H1 (cell line): ENCODE measurements at regions of chr12 and their contacts with region 1.

Region 1: DNA sequence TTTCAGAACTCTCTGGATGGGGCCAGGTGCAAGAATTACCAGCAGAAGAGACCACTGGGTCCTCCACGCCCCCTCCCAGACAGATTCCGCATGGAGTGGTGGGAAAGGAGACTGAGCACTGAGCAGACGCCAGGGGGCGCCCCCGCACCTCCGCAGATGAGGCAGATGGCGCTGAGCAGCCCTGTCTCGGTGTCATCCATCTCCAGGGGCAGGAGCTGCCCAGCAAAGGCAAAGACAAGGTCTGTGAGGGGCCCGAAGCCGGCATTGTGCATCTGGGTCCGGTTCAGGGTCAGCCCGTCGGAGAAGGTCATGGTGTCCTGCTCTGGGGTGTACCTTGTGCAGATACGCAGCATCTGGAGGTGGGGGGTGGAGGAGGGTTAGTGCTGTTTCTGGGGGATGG is 6.3 kb upstream of the ITGB7 start:
- DNase-seq: peak in 1 of 2 experiments; percentile 96
- H3K4me3 ChIP-seq: no peak overlapping the region
- H3K27ac ChIP-seq: no peak overlapping the region
- H3K4me1 ChIP-seq: peaks cover 21 to 45% (median 35%) of the 10 kb centered on the region in 4 experiments
- H3K27me3 ChIP-seq: no peaks in the 10 kb centered on the region
- CTCF ChIP-seq: peak in 2 of 3 experiments; percentile 96 to 97; a peak in 3 of 4 replicates
- EP300 ChIP-seq: no peak
- POLR2A ChIP-seq: no peak
- RAD21 ChIP-seq: peak; percentile 98

Region 2: DNA sequence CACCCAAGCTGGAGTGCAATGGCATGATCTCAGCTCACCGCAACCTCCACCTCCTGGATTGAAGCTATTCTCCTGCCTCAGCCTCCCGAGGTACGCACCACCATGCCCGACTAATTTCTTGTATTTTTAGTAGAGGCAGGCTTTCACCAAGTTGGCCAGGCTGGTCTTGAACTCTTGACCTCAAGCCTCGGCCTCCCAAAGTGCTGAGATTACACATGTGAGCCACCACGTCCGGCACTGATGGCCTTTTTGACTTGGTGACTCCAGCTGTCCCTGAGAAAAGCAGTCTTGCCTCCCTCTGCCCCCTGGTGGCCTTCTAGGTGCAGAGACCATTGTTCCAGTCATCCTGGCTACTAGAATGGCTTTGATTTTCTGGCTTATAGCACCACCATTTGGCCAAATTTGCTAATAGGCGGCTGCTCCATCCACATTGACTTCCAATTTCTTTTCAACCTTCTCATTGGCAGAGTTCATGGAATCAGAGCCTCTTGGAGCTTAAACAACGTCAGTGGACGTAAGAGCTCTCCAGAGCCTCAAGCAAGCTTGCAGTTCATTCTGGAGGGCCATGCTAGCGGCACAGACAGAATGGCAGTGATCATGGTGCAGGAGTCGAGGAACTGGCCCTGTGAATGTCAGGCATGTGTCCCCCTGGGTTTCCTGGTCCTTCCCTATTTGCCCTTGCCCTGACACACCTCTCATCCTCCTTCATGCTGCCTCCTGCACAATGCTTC is 232.5 kb before region 1 on chr12:
- CTCF ChIA-PET with region 1: no interaction called
- POLR2A ChIA-PET with region 1: no interaction called
- DNase-seq: peak; percentile 84 to 88
- H3K4me3 ChIP-seq: no peak overlapping the region
- H3K27ac ChIP-seq: no peak overlapping the region
- H3K4me1 ChIP-seq: peaks cover 0 to 10% (median 0%) of the 10 kb centered on the region in 4 experiments; a peak in 1 of 7 replicates
- H3K27me3 ChIP-seq: no peaks in the 10 kb centered on the region
- CTCF ChIP-seq: peak; percentile 92 to 100 (median 100)
- EP300 ChIP-seq: no peak
- POLR2A ChIP-seq: no peak
- RAD21 ChIP-seq: peak; percentile 100

Region 3: DNA sequence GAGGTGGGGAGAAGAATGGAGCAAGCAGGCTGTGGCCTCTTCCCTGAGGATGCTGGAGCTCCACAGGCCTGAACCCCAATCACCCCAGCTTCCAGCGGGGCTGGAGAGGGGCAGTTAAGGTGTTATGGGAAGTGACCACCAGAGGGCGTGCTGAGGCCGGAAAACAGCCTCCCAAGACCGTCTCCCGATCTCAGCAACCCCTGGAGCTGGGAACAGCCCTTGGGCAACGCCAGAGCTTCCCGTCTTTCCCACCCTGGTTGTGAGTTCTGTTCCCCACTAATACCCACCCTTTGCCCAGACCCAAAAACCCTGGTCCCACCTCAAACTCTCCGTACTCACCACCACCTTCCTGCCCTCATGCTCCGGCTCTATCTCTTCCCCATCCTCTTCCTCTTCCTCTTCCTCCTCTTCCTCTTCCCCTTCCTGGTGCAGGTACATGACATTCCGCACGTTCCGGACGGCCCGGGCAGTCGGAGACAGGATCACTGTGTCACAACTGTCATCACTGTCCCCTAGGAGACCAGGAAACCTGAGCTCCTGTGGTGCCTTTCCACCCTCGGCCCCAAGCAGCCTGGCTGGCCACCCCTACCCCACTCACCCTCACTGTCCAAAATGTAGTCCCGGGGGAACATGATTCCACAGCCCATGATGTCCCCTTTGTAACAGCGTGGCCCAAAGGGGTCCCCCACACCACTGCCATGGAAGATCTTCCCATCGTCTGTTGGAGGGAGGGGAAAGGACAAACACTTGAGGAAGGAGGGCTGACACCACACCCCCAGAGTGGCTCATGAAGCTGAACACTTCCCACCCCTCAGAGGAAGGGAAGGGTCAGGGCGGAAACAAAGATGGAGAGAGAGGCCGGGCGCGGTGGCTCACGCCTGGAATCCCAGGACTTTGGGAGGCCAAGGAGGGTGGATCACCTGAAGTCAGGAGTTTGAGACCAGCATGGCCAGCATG is 147.1 kb before region 1 on chr12:
- CTCF ChIA-PET with region 1: interaction called, 18 read pairs
- POLR2A ChIA-PET with region 1: no interaction called
- DNase-seq: peak in 1 of 2 experiments; percentile 93
- H3K4me3 ChIP-seq: no peak overlapping the region
- H3K27ac ChIP-seq: no peak overlapping the region
- H3K4me1 ChIP-seq: peaks cover 4 to 23% (median 6%) of the 10 kb centered on the region in 4 experiments
- H3K27me3 ChIP-seq: peaks cover 0 to 2% (median 0%) of the 10 kb centered on the region in 4 experiments; a peak in 2 of 7 replicates
- CTCF ChIP-seq: peak in 2 of 3 experiments; percentile 94 to 97; a peak in 3 of 4 replicates
- EP300 ChIP-seq: no peak
- POLR2A ChIP-seq: no peak
- RAD21 ChIP-seq: peak; percentile 96 to 97

Region 4: DNA sequence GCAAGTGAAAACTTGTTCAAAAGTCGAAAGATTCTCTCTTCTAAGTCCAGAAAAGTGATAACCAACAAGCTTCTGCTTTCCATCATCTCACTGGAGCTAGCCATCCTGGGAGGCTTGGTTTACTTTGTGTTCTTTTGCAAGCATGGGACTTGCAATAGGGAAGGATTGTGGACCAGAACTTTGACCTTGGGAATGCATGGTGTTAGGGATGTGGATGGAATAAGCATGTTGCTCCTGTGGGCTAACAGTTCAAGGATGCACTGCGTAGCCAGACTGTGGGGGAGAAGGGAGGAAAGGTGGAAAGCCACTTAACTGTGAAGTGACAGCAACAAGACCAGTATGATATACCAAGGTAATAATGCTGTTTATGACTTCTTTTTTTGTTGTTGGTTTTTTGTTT is 81.5 kb before region 1 on chr12:
- CTCF ChIA-PET with region 1: no interaction called
- POLR2A ChIA-PET with region 1: no interaction called
- DNase-seq: peak in 1 of 2 experiments; percentile 24
- H3K4me3 ChIP-seq: no peak overlapping the region
- H3K27ac ChIP-seq: no peak overlapping the region
- H3K4me1 ChIP-seq: no peaks in the 10 kb centered on the region
- H3K27me3 ChIP-seq: no peaks in the 10 kb centered on the region
- CTCF ChIP-seq: no peak
- EP300 ChIP-seq: no peak
- POLR2A ChIP-seq: no peak
- RAD21 ChIP-seq: no peak

Region 5: GRCh38 chr12:53180220-53180930 is 33.0 kb before region 1 on chr12 and contains the starts of genes CSAD and ZNF740:
- CTCF ChIA-PET with region 1: interaction called, 36 read pairs
- POLR2A ChIA-PET with region 1: interaction called, 5 read pairs
- DNase-seq: peak; percentile 94
- H3K4me3 ChIP-seq: peak within 1 kb of the TSS; percentile 71 to 89 (median 83)
- H3K27ac ChIP-seq: peak within 1 kb of the TSS; percentile 50; the same call in 1 of the 2 replicates
- H3K4me1 ChIP-seq: peaks cover 2 to 10% (median 4%) of the 10 kb centered on the region in 4 experiments; a peak in 6 of 7 replicates
- H3K27me3 ChIP-seq: peaks cover 7 to 35% (median 21%) of the 10 kb centered on the region in 4 experiments
- CTCF ChIP-seq: no peak
- EP300 ChIP-seq: peak in 1 of 2 experiments; percentile 56; a peak in 1 of 3 replicates
- POLR2A ChIP-seq: peak in 1 of 2 experiments; percentile 52; a peak in 1 of 3 replicates
- RAD21 ChIP-seq: no peak
- total RNA-seq, gene CSAD: 8.8 and 10.0 TPM in 2 replicates
- total RNA-seq, gene ZNF740: 35.6 and 40.0 TPM in 2 replicates

Region 6: GRCh38 chr12:53225635-53226424 is 12.5 kb after region 1 on chr12:
- CTCF ChIA-PET with region 1: interaction called, 535 read pairs
- POLR2A ChIA-PET with region 1: interaction called, 151 read pairs
- DNase-seq: no peak
- H3K4me3 ChIP-seq: no peak overlapping the region
- H3K27ac ChIP-seq: no peak overlapping the region
- H3K4me1 ChIP-seq: peaks cover 35 to 59% (median 41%) of the 10 kb centered on the region in 4 experiments
- H3K27me3 ChIP-seq: no peaks in the 10 kb centered on the region
- CTCF ChIP-seq: no peak
- EP300 ChIP-seq: no peak
- POLR2A ChIP-seq: no peak
- RAD21 ChIP-seq: no peak; a peak in 1 of 4 replicates

Region 7: DNA sequence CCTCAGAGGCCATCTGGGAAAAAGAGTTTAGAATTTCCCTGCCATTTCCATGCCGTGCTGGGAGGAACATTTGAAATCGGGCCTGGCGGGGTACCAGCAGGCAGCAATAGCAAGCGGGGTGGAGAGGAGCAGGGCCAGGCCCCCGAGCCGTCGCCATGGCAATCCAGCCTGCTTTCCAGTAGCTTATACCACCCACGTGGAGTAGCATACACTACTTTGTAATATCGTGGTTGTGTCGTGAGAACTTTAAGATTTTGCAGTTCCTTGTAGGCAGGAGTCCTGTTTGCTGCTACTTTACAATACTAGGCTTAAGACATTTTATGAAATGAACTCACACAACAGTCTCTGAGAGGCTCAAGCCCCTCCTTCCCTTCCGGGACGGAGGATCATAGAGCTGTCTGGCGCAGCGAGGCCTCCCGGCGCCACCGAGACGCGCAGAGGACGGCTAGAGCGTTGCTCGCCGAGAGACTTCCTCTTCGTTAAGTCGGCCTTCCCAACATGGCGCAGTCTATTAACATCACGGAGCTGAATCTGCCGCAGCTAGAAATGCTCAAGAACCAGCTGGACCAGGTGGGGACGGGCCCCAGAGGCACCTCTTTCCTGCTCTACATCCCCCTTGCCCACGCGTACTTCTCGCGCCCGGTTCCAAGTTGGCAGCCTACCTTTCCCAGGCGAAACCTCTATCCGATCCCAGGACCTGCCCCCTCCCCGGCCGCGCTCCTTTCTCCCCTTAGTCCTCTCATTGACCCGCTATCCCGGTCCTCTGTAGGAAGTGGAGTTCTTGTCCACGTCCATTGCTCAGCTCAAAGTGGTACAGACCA is 81.9 kb after region 1 on chr12 and contains the start of gene PFDN5:
- CTCF ChIA-PET with region 1: interaction called, 573 read pairs
- POLR2A ChIA-PET with region 1: interaction called, 16 read pairs
- DNase-seq: peak; percentile 61 to 86
- H3K4me3 ChIP-seq: peak within 1 kb of the TSS; percentile 70 to 100 (median 100)
- H3K27ac ChIP-seq: peak within 1 kb of the TSS; percentile 70
- H3K4me1 ChIP-seq: peaks cover 0 to 4% (median 2%) of the 10 kb centered on the region in 4 experiments; a peak in 5 of 7 replicates
- H3K27me3 ChIP-seq: no peaks in the 10 kb centered on the region
- CTCF ChIP-seq: no peak
- EP300 ChIP-seq: no peak
- POLR2A ChIP-seq: peak; percentile 34 to 87
- RAD21 ChIP-seq: no peak
- total RNA-seq, gene PFDN5: 265 and 290 TPM in 2 replicates